ENCODE measurements at regions of chrX and their contacts with region 1.

Region 1: GRCh38 chrX:9555354-9555753 is 90.5 kb downstream of the TBL1X start:
- DNase-seq: no peak
- H3K4me3 ChIP-seq: no peak overlapping the region
- H3K27ac ChIP-seq: no peak overlapping the region
- H3K4me1 ChIP-seq: no peaks in the 10 kb centered on the region
- H3K27me3 ChIP-seq: no peaks in the 10 kb centered on the region
- CTCF ChIP-seq: no peak

Region 2: GRCh38 chrX:9362363-9362928 is 192.9 kb before region 1 on chrX:
- CTCF ChIA-PET with region 1: no interaction called
- POLR2A ChIA-PET with region 1: no interaction called
- intact Hi-C with region 1: no loop called
- DNase-seq: no peak
- H3K4me3 ChIP-seq: no peak overlapping the region
- H3K27ac ChIP-seq: no peak overlapping the region
- H3K4me1 ChIP-seq: no peaks in the 10 kb centered on the region
- H3K27me3 ChIP-seq: no peaks in the 10 kb centered on the region
- CTCF ChIP-seq: no peak

Region 3: DNA sequence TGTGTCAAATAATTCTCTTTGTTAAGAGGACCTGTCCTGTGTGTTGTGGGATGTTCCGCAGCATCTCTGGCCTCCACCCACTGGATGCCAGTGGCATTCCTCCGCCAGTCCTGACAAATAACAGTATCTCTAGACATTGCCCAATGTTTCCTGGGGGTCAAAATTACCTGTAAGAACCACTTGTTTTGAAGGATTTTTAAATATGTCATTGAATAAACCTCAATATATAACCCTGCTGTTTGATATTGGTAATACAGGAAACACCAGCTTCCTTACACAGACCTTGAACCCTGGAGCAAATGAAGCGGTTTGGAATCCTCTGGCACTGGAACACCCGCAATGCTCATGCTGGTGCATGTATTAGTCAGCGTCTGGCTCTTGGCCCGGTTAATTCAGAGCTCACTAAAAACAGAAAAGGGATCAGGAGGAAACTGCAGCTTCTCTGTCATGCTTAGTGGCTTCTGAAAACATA is 10.8 kb after region 1 on chrX:
- CTCF ChIA-PET with region 1: no interaction called
- POLR2A ChIA-PET with region 1: interaction called, 21 read pairs
- intact Hi-C with region 1: no loop called
- DNase-seq: peak in 1 of 2 experiments; percentile 34
- H3K4me3 ChIP-seq: no peak overlapping the region
- H3K27ac ChIP-seq: no peak overlapping the region
- H3K4me1 ChIP-seq: no peaks in the 10 kb centered on the region
- H3K27me3 ChIP-seq: no peaks in the 10 kb centered on the region
- CTCF ChIP-seq: no peak

Region 4: DNA sequence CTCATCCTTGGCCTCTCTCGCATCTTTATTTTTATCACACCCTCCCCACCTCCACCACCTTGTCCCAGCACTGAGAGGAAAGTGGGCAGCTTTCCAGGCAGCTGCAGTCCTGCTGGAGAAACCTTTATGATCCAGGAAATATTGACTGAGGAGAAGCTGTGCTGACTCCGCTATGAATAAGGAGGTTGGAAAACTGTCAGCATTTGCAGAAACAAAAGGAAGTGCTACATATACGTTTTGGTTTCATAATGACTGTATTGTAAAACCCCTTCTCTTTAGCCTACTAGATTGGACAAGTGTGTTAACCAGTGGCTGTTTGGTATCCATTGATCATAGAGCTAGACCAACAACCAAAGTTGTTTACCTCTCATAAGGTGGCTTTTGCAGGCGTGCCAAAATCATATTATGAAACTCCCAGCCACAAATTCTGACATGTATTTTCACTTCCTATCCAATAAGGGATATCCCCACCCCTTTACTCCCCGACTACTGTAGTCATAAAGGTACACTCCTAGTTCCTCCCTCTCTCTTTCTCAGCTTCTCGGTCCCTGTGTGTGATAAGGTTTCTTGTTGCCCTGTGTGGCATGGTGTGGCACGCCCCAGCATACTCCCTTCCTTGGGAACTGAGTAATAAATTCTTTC is 121.9 kb after region 1 on chrX:
- CTCF ChIA-PET with region 1: no interaction called
- POLR2A ChIA-PET with region 1: no interaction called
- intact Hi-C with region 1: no loop called
- DNase-seq: no peak
- H3K4me3 ChIP-seq: no peak overlapping the region
- H3K27ac ChIP-seq: no peak overlapping the region
- H3K4me1 ChIP-seq: no peaks in the 10 kb centered on the region
- H3K27me3 ChIP-seq: no peaks in the 10 kb centered on the region
- CTCF ChIP-seq: no peak

Measured in PC-9 (cell line).